Adrenal gland (tissue), 19 donors: ENCODE measurements at regions of chr1 and their contacts with region 1.

Region 1: GRCh38 chr1:85244271-85245061 is 15.0 kb downstream of the C1orf52 start:
- DNase-seq: no peak
- H3K4me3 ChIP-seq: no peak overlapping the region
- H3K27ac ChIP-seq: no peak overlapping the region
- H3K4me1 ChIP-seq: peaks cover 0 to 5% of the 10 kb centered on the region in 2 donors
- H3K27me3 ChIP-seq: no peaks in the 10 kb centered on the region
- CTCF ChIP-seq: no peak
- POLR2A ChIP-seq: no peak

Region 2: DNA sequence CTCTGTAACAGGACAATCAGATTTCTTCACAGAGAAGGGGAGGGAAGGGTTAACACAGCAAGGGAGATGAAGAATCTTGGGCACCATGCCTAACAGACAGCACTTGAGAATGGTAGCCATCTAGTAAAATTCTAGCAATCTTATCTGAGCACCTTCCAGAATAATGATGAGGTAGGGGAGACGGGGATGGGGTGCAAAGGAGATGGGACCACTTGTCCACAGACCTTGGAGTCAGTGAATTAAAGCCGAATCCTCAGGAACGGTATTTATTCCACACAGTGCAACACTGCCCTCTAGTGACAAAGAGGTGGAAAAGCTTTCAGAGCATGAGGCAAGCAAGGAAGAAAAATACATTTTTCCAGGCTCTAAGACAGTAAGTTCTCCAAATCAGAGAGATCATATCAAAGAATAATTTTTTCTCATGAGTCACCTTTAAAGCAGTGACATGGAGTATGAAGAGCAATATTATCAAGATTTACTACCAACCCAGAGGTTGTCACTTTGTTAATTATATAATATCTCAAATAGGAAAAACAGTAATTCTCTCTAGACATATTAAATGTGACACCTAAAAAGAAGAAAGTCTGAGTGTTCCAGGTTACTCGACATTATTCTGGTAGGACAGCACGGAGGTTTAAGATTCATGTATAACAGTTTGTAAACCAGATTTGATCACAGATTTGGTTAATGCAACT is 308.2 kb before region 1 on chr1:
- intact Hi-C with region 1: loop called in 1 of 2 experiments (anchors 5 kb)
- DNase-seq: peak; percentile 21 to 68 (median 39)
- H3K4me3 ChIP-seq: no peak overlapping the region
- H3K27ac ChIP-seq: no peak overlapping the region
- H3K4me1 ChIP-seq: peaks cover 6 to 7% of the 10 kb centered on the region in 2 donors
- H3K27me3 ChIP-seq: no peaks in the 10 kb centered on the region
- CTCF ChIP-seq: peak; percentile 88 to 96 (median 92)
- POLR2A ChIP-seq: no peak